ENCODE measurements at regions of chr1 and their contacts with region 1.

Region 1: DNA sequence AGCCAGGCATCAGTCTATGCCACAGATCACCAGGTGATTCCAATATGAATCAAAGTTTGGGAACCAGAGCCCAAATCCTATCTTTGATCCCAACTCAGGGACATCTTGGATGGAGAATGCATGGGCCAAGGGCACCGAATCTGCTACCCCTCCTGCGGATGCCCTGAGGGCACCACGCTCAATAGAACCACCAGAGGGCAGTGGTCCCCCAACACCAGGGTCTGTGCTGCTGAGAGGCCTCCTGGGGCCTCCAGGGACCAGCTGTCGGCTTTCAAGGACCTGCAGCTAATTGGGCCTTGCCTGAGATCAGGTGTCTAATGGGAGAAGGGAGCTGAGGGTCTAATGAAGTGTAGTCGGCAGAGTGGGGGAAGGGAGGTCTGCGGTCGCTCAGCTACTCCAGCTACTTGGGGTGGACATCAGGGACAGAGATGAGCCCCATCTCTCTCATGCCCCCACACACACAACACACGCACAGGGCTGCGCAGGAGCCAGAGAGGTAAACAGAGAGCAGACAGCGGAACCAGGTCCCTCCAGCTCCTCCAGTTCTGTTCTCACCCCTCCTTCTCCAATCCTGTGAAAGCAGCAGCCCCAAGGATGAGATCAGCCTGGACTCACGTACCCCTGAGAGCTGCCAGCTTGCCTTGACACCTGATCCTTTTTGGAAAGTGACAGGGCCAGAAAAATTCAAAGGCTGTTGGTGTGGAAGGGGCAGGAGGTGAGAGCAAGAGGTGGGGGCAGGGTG is 34.9 kb upstream of the PPP1R15B start:
- DNase-seq: peak; percentile 70
- ATAC-seq: peak; percentile 90
- H3K4me3 Mint-ChIP-seq: peak overlapping the region; percentile 62
- H3K27ac Mint-ChIP-seq: peak overlapping the region; percentile 82
- H3K4me1 Mint-ChIP-seq: peaks cover 60% of the 10 kb centered on the region
- H3K27me3 Mint-ChIP-seq: no peaks in the 10 kb centered on the region
- CTCF ChIP-seq: no peak

Region 2: DNA sequence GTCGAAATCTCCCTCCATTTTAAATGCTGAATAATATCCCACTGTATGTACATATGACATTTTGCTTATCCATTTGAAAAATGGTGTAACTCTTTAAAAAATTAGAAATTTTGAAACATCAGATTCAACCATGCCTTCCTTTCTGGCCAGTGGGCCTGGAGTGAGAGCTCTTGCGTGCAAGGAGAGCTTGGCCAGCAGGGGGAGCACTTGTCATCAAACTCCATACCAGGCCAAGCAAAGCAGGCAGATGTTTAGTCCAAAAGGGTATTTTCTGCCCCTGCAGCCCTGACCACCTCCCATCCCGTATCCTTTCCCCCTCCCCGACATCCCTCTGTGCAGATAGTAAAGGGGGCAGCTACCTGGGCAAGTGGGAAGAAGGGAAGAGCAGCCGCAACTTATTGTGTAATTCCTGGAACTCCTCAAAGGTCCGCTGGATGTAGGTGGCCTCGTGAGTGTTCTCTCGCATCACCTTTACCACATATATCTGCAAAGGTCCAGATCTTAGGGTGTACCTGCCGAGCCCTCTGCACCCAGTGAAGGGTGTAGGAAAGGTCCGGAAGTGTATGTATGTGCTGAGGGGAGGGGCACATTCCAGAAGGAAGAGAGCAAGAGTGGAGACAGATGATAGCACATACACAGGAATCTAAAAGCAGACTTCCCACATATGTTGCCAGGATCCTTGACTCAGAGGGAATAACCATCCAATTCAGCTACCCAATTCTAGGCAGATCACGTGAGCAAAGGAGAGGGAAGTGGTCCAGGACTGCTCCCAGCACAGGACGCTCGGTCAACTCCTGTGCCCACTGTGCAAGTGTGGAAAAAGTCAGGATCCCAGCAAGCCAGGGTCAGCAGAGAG is 15.0 kb before region 1 on chr1:
- CTCF ChIA-PET with region 1: interaction called, 97 read pairs
- POLR2A ChIA-PET with region 1: interaction called, 5 read pairs
- intact Hi-C with region 1: loop called (anchors 1 kb)
- DNase-seq: peak; percentile 70
- ATAC-seq: peak; percentile 87
- H3K4me3 Mint-ChIP-seq: no peak overlapping the region
- H3K27ac Mint-ChIP-seq: peak overlapping the region; percentile 41
- H3K4me1 Mint-ChIP-seq: peaks cover 5% of the 10 kb centered on the region
- H3K27me3 Mint-ChIP-seq: no peaks in the 10 kb centered on the region
- CTCF ChIP-seq: peak; percentile 40

Region 3: GRCh38 chr1:204465546-204466415 is 19.2 kb after region 1 on chr1:
- CTCF ChIA-PET with region 1: interaction called, 40 read pairs
- POLR2A ChIA-PET with region 1: interaction called, 39 read pairs
- intact Hi-C with region 1: loop called (anchors 2 kb)
- DNase-seq: peak; percentile 49
- ATAC-seq: peak; percentile 53
- H3K4me3 Mint-ChIP-seq: peak overlapping the region; percentile 52
- H3K27ac Mint-ChIP-seq: peak overlapping the region; percentile 94
- H3K4me1 Mint-ChIP-seq: peaks cover 85% of the 10 kb centered on the region
- H3K27me3 Mint-ChIP-seq: no peaks in the 10 kb centered on the region
- CTCF ChIP-seq: no peak

Region 4: GRCh38 chr1:204480515-204480914 is 34.0 kb after region 1 on chr1:
- CTCF ChIA-PET with region 1: interaction called, 85 read pairs
- POLR2A ChIA-PET with region 1: interaction called, 128 read pairs
- intact Hi-C with region 1: loop called (anchors 1 kb)
- DNase-seq: peak; percentile 40
- ATAC-seq: peak; percentile 57
- H3K4me3 Mint-ChIP-seq: peak overlapping the region; percentile 76
- H3K27ac Mint-ChIP-seq: peak overlapping the region; percentile 98
- H3K4me1 Mint-ChIP-seq: peaks cover 98% of the 10 kb centered on the region
- H3K27me3 Mint-ChIP-seq: no peaks in the 10 kb centered on the region
- CTCF ChIP-seq: no peak

Region 5: DNA sequence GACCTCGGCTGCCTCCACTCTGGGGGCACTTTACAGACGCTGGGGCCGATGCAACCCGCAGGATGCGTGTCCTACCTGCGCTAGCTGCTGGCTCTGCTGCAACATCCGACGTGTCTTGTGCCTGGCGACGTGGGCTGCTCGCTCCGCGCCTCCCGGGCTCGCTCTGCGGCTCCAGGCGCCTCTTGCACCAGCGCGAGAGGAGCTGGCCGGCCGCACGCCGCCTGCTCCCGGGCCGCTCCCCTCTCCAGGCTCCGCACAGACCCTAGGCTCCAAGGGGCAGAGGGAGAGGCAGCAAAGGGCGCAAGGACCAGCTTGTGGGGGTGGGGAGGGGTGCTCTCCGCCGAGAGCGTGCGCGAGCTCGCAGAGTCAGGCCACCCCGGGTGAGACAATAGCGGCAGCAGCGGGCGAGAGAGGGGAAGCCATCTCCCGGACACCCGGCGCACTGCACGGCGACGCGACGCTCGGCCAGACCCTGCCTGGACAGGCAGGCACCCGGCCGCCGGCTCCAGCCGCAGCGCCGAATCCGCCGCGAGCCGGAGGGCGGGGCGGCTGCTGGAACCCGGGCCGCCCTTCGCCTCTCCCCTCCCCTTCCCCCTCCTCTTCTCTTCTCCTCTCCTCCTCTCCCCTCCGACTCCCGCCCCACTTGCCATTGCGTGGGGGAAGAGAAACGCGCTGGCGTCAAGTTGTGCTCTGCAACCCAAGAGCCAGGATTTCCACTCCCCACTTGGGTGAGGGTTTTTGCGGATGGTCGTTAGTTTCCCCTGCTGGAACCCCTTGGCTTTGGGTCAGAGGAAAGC is 47.9 kb after region 1 on chr1 and contains the start of gene PIK3C2B:
- CTCF ChIA-PET with region 1: interaction called, 1,006 read pairs
- POLR2A ChIA-PET with region 1: interaction called, 413 read pairs
- intact Hi-C with region 1: loop called (anchors 1 kb)
- DNase-seq: peak; percentile 71
- ATAC-seq: peak; percentile 75
- H3K4me3 Mint-ChIP-seq: peak within 1 kb of the TSS; percentile 97
- H3K27ac Mint-ChIP-seq: peak within 1 kb of the TSS; percentile 97
- H3K4me1 Mint-ChIP-seq: peaks cover 80% of the 10 kb centered on the region
- H3K27me3 Mint-ChIP-seq: no peaks in the 10 kb centered on the region
- CTCF ChIP-seq: no peak
- total RNA-seq, gene PIK3C2B: 127 and 151 TPM in 2 replicates

Region 6: GRCh38 chr1:204692325-204692840 is 245.8 kb after region 1 on chr1:
- CTCF ChIA-PET with region 1: no interaction called
- POLR2A ChIA-PET with region 1: no interaction called
- intact Hi-C with region 1: no loop called
- DNase-seq: no peak
- ATAC-seq: no peak
- H3K4me3 Mint-ChIP-seq: no peak overlapping the region
- H3K27ac Mint-ChIP-seq: no peak overlapping the region
- H3K4me1 Mint-ChIP-seq: no peaks in the 10 kb centered on the region
- H3K27me3 Mint-ChIP-seq: peaks cover 38% of the 10 kb centered on the region
- CTCF ChIP-seq: no peak

Region 7: DNA sequence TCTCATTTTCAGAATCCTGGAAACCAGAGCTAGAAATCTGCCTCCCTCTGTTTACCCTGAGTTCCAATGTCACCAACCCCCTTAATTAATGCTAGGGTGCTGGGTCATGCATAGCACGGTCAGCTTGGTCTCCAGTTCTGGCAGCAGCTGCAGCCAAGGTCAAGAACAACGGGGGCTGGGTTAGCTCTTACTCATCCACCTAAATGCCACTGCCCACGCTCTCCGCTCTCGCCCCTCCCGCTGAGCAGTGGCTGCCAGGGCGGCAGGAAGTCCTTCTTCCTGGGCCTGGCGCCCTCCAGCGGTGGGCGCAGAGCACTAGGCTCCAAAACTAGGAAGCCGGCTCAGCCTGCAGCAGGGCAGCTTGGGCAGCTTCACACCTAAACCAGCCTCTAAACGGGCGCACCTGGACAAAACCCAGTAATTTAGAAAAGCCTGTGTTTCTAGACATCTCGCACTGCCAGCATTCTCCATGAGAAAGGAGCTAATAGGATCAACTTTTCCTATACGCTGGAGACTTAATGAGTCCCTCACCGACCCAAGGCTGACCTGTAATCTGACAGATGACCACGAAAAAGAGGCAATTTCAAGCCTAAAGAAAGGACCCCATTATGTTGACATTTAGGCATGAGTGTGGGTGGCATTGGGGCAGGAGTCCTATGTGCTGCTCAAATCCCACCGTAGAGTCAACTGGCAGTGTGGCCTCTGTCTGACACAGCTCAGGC is 317.3 kb after region 1 on chr1:
- CTCF ChIA-PET with region 1: interaction called, 3 read pairs
- POLR2A ChIA-PET with region 1: no interaction called
- intact Hi-C with region 1: loop called (anchors 5 kb)
- DNase-seq: peak; percentile 50
- ATAC-seq: peak; percentile 97
- H3K4me3 Mint-ChIP-seq: peak overlapping the region; percentile 3
- H3K27ac Mint-ChIP-seq: no peak overlapping the region
- H3K4me1 Mint-ChIP-seq: peaks cover 6% of the 10 kb centered on the region
- H3K27me3 Mint-ChIP-seq: peaks cover 29% of the 10 kb centered on the region
- CTCF ChIP-seq: peak; percentile 67